ENCODE measurements at regions of chr20 and their contacts with region 1.

Region 1: GRCh38 chr20:15603978-15604805 is 969.1 kb downstream of the KIF16B start:
- DNase-seq: no peak
- H3K4me3 ChIP-seq: no peak overlapping the region
- H3K27ac ChIP-seq: no peak overlapping the region
- H3K4me1 ChIP-seq: peaks cover 14% of the 10 kb centered on the region
- H3K27me3 ChIP-seq: no peaks in the 10 kb centered on the region
- CTCF ChIP-seq: no peak

Region 2: GRCh38 chr20:14888134-14888533 is 716.1 kb before region 1 on chr20:
- CTCF ChIA-PET with region 1: no interaction called
- POLR2A ChIA-PET with region 1: no interaction called
- intact Hi-C with region 1: no loop called
- DNase-seq: no peak
- H3K4me3 ChIP-seq: no peak overlapping the region
- H3K27ac ChIP-seq: no peak overlapping the region
- H3K4me1 ChIP-seq: no peaks in the 10 kb centered on the region
- H3K27me3 ChIP-seq: no peaks in the 10 kb centered on the region
- CTCF ChIP-seq: no peak

Region 3: GRCh38 chr20:15654208-15654645 is 50.0 kb after region 1 on chr20:
- CTCF ChIA-PET with region 1: no interaction called
- POLR2A ChIA-PET with region 1: no interaction called
- intact Hi-C with region 1: no loop called
- DNase-seq: peak; percentile 19 to 58
- H3K4me3 ChIP-seq: no peak overlapping the region
- H3K27ac ChIP-seq: no peak overlapping the region
- H3K4me1 ChIP-seq: 0 out of 2 replicates have a peak, but pooled peaks cover 5% of the 10 kb centered on the region
- H3K27me3 ChIP-seq: no peaks in the 10 kb centered on the region
- CTCF ChIP-seq: peak; percentile 65

Region 4: GRCh38 chr20:16241915-16242314 is 637.7 kb after region 1 on chr20:
- CTCF ChIA-PET with region 1: interaction called, 15 read pairs
- POLR2A ChIA-PET with region 1: no interaction called
- intact Hi-C with region 1: no loop called
- DNase-seq: no peak
- H3K4me3 ChIP-seq: no peak overlapping the region
- H3K27ac ChIP-seq: no peak overlapping the region
- H3K4me1 ChIP-seq: no peaks in the 10 kb centered on the region
- H3K27me3 ChIP-seq: no peaks in the 10 kb centered on the region
- CTCF ChIP-seq: no peak; the same call in 1 of the 2 replicates

Measured in PC-9 (cell line).